Panc1 (cell line): ENCODE measurements at regions of chr7 and their contacts with region 1.

Region 1: DNA sequence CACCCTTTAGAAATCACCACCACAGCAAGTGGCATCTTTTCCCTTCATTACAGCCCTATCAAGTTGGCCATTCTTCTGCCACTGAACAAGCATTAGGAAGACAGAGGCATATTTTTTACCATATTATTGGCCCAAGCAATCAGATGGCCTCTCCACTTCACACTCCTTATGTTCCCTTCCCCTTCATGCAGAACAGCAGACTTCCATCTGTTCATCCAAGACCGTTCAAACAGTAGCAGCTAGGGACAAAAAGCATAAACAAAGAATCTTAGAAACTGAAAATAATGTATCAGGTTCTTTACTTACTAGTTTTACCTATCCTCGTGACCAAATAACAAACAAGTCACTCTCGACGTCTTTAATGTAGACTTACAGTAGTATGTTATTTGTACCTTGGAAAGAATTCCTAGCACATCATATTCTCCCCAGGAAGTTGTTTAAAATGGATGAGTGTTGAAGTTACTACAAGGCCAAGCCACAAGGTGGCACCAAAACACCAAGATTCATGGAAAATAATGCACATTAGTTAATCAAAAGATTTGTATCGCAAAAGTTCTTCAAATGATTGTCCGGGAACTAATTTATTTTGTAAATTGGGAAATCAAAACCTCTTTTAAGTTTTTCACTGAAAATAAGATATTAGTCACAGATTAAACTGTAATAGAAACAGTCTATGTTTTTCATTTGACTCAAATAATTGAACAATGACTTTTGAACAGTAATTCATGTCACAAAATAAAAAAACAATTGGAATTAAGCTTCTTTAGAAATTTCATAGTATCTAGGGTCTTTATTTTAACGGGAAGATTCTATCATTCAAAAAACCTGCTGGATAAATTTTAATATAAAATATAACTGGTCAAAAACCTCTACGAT is 112.1 kb downstream of the VPS41 start:
- DNase-seq: peak; percentile 39
- ATAC-seq: no peak
- H3K4me3 ChIP-seq: no peak overlapping the region
- H3K27ac ChIP-seq: no peak overlapping the region
- H3K4me1 ChIP-seq: no peaks in the 10 kb centered on the region
- H3K27me3 ChIP-seq: no peaks in the 10 kb centered on the region
- CTCF ChIP-seq: peak; percentile 78

Region 2: DNA sequence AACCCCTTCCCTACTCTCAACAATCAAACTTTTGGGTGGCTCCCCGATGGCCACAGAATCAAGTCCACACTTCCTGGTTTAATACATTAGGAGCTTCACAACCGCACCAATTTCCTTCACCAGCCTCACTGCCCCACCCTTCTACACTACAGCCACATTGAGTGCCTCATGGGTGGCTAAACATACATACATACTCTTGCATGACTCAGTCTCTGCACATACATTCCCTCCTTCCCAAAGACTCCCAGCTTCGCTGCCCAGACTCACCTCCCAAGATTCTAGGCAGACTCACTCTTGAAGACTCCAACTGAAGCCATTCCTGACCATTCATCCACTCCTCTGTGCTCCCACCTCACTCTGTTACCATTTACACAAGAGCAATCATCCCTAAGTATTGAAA is 96.2 kb after region 1 on chr7:
- CTCF ChIA-PET with region 1: no interaction called
- POLR2A ChIA-PET with region 1: no interaction called
- in situ Hi-C with region 1: no loop called
- intact Hi-C with region 1: no loop called
- DNase-seq: no peak
- ATAC-seq: no peak
- H3K4me3 ChIP-seq: no peak overlapping the region
- H3K27ac ChIP-seq: no peak overlapping the region
- H3K4me1 ChIP-seq: no peaks in the 10 kb centered on the region
- H3K27me3 ChIP-seq: no peaks in the 10 kb centered on the region
- CTCF ChIP-seq: no peak

Region 3: GRCh38 chr7:39184380-39184779 is 387.5 kb after region 1 on chr7:
- CTCF ChIA-PET with region 1: no interaction called
- POLR2A ChIA-PET with region 1: no interaction called
- in situ Hi-C with region 1: no loop called
- intact Hi-C with region 1: no loop called
- DNase-seq: no peak
- ATAC-seq: no peak
- H3K4me3 ChIP-seq: no peak overlapping the region
- H3K27ac ChIP-seq: no peak overlapping the region
- H3K4me1 ChIP-seq: no peaks in the 10 kb centered on the region
- H3K27me3 ChIP-seq: no peaks in the 10 kb centered on the region
- CTCF ChIP-seq: no peak

Region 4: GRCh38 chr7:39465055-39465929 is 668.4 kb after region 1 on chr7:
- CTCF ChIA-PET with region 1: no interaction called
- POLR2A ChIA-PET with region 1: no interaction called
- in situ Hi-C with region 1: no loop called
- intact Hi-C with region 1: loop called (anchors 1 kb)
- DNase-seq: peak; percentile 36
- ATAC-seq: peak; percentile 90
- H3K4me3 ChIP-seq: no peak overlapping the region
- H3K27ac ChIP-seq: no peak overlapping the region
- H3K4me1 ChIP-seq: peaks cover 4% of the 10 kb centered on the region; the same call in 1 of the 2 replicates
- H3K27me3 ChIP-seq: peaks cover 8% of the 10 kb centered on the region
- CTCF ChIP-seq: peak; percentile 88